ENCODE measurements at regions of chr22 and their contacts with region 1.

Region 1: GRCh38 chr22:44710474-44711457 is 8.8 kb downstream of the PRR5 start:
- DNase-seq: peak; percentile 45 to 80 (median 62)
- H3K4me3 ChIP-seq: no peak overlapping the region
- H3K4me3 Mint-ChIP-seq: peak overlapping the region; percentile 81 to 93 (median 85)
- H3K27ac ChIP-seq: peak overlapping the region; percentile 38
- H3K27ac Mint-ChIP-seq: peak overlapping the region; percentile 92 to 98 (median 96)
- H3K4me1 ChIP-seq: peaks cover 41% of the 10 kb centered on the region
- H3K4me1 Mint-ChIP-seq: peaks cover 42 to 74% (median 59%) of the 10 kb centered on the region in 3 donors
- H3K27me3 ChIP-seq: no peaks in the 10 kb centered on the region
- H3K27me3 Mint-ChIP-seq: peaks cover 0 to 1% of the 10 kb centered on the region in 2 donors

Region 2: GRCh38 chr22:44444341-44445301 is 266.1 kb before region 1 on chr22:
- CTCF ChIA-PET with region 1: no interaction called
- POLR2A ChIA-PET with region 1: no interaction called
- DNase-seq: peak in 1 of 5 donors; percentile 36
- H3K4me3 ChIP-seq: no peak overlapping the region
- H3K4me3 Mint-ChIP-seq: no peak overlapping the region
- H3K27ac ChIP-seq: no peak overlapping the region
- H3K27ac Mint-ChIP-seq: peak overlapping the region in 1 of 8 donors; percentile 72
- H3K4me1 ChIP-seq: no peaks in the 10 kb centered on the region
- H3K4me1 Mint-ChIP-seq: no peaks in the 10 kb centered on the region
- H3K27me3 ChIP-seq: no peaks in the 10 kb centered on the region
- H3K27me3 Mint-ChIP-seq: no peaks in the 10 kb centered on the region

Region 3: GRCh38 chr22:44735540-44736488 is 25.0 kb after region 1 on chr22:
- CTCF ChIA-PET with region 1: interaction called, 20 read pairs
- POLR2A ChIA-PET with region 1: no interaction called
- DNase-seq: peak; percentile 70 to 88 (median 78)
- H3K4me3 ChIP-seq: no peak overlapping the region
- H3K4me3 Mint-ChIP-seq: no peak overlapping the region
- H3K27ac ChIP-seq: no peak overlapping the region
- H3K27ac Mint-ChIP-seq: peak overlapping the region in 7 of 8 donors; percentile 3 to 84 (median 68)
- H3K4me1 ChIP-seq: no peaks in the 10 kb centered on the region
- H3K4me1 Mint-ChIP-seq: peaks cover 5 to 8% (median 6%) of the 10 kb centered on the region in 3 donors
- H3K27me3 ChIP-seq: no peaks in the 10 kb centered on the region
- H3K27me3 Mint-ChIP-seq: no peaks in the 10 kb centered on the region

Region 4: GRCh38 chr22:44796972-44797725 is 86.4 kb after region 1 on chr22:
- CTCF ChIA-PET with region 1: no interaction called
- POLR2A ChIA-PET with region 1: no interaction called
- DNase-seq: no peak
- H3K4me3 ChIP-seq: no peak overlapping the region
- H3K4me3 Mint-ChIP-seq: no peak overlapping the region
- H3K27ac ChIP-seq: no peak overlapping the region
- H3K27ac Mint-ChIP-seq: no peak overlapping the region
- H3K4me1 ChIP-seq: no peaks in the 10 kb centered on the region
- H3K4me1 Mint-ChIP-seq: no peaks in the 10 kb centered on the region
- H3K27me3 ChIP-seq: no peaks in the 10 kb centered on the region
- H3K27me3 Mint-ChIP-seq: peaks cover 0 to 2% of the 10 kb centered on the region in 2 donors